PC-3 (cell line): ENCODE measurements at regions of chr12 and their contacts with region 1.

Region 1: DNA sequence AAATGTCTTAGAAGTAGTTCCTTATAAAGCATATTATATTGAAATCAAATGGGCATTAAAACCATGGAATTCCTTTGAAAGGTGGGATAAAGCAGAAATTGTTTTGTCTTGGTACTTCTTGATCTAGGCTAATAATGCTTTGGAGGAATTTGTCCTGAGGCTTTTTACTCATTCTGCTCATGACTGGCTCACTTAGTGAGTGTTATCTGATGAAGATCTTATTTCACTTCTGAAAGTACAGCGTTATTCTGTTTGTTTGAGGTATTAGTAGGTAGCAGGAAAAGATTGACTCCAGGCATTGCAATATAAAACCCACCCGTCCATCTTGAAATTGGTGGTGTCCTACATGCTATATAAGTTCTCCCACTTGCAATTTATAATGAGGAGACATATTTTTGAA is 5.4 kb downstream of the C12orf71 start:
- DNase-seq: peak; percentile 97
- ATAC-seq: peak; percentile 96
- H3K4me3 ChIP-seq: peak overlapping the region; percentile 20; the same call in 1 of the 2 replicates
- H3K27ac ChIP-seq: peak overlapping the region; percentile 22
- H3K4me1 ChIP-seq: peaks cover 23% of the 10 kb centered on the region
- H3K27me3 ChIP-seq: no peaks in the 10 kb centered on the region
- CTCF ChIP-seq: no peak

Region 2: GRCh38 chr12:27052176-27052575 is 24.8 kb before region 1 on chr12:
- CTCF ChIA-PET with region 1: interaction called, 3 read pairs
- POLR2A ChIA-PET with region 1: no interaction called
- intact Hi-C with region 1: loop called (anchors 1 kb)
- DNase-seq: peak; percentile 48
- ATAC-seq: peak; percentile 80
- H3K4me3 ChIP-seq: no peak overlapping the region
- H3K27ac ChIP-seq: no peak overlapping the region
- H3K4me1 ChIP-seq: peaks cover 24% of the 10 kb centered on the region
- H3K27me3 ChIP-seq: no peaks in the 10 kb centered on the region
- CTCF ChIP-seq: no peak

Region 3: DNA sequence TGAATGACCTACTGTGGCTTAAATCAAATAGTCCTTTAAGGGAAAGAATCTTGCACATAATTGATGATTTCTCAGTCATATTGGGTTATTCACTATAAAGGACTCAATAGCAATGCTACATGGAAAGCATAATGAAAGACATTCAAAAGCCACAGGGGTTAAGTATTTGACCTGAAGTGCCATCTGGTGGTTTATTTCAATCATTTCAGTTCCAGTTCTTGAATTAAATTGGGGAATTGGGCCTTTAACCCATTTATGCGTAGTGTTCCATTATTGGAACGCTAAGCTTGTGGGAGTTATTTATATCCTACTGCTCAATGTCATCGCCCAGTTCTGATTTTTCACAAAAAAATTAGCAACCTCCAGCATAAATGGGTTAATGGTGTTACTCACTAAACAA is 46.7 kb after region 1 on chr12:
- CTCF ChIA-PET with region 1: no interaction called
- POLR2A ChIA-PET with region 1: no interaction called
- intact Hi-C with region 1: loop called (anchors 5 kb)
- DNase-seq: peak; percentile 58
- ATAC-seq: peak; percentile 67
- H3K4me3 ChIP-seq: no peak overlapping the region
- H3K27ac ChIP-seq: no peak overlapping the region
- H3K4me1 ChIP-seq: no peaks in the 10 kb centered on the region
- H3K27me3 ChIP-seq: no peaks in the 10 kb centered on the region
- CTCF ChIP-seq: peak; percentile 66